ENCODE measurements at regions of chrX and their contacts with region 1.

Region 1: GRCh38 chrX:71532753-71533425 is at the start of gene OGT:
- DNase-seq: peak; percentile 95
- H3K4me3 Mint-ChIP-seq: peak within 1 kb of the TSS; percentile 96
- H3K27ac Mint-ChIP-seq: peak within 1 kb of the TSS; percentile 99
- H3K4me1 Mint-ChIP-seq: peaks cover 22% of the 10 kb centered on the region
- H3K27me3 Mint-ChIP-seq: no peaks in the 10 kb centered on the region
- total RNA-seq, gene OGT: 360 to 382 TPM

Region 2: GRCh38 chrX:71111141-71111843 is 421.6 kb before region 1 on chrX and contains the start of gene IL2RG:
- CTCF ChIA-PET with region 1: no interaction called
- POLR2A ChIA-PET with region 1: interaction called, 14 read pairs
- DNase-seq: peak; percentile 83
- H3K4me3 Mint-ChIP-seq: peak within 1 kb of the TSS; percentile 98
- H3K27ac Mint-ChIP-seq: peak within 1 kb of the TSS; percentile 99
- H3K4me1 Mint-ChIP-seq: peaks cover 39% of the 10 kb centered on the region
- H3K27me3 Mint-ChIP-seq: no peaks in the 10 kb centered on the region
- total RNA-seq, gene IL2RG: 633 to 637 TPM

Region 3: DNA sequence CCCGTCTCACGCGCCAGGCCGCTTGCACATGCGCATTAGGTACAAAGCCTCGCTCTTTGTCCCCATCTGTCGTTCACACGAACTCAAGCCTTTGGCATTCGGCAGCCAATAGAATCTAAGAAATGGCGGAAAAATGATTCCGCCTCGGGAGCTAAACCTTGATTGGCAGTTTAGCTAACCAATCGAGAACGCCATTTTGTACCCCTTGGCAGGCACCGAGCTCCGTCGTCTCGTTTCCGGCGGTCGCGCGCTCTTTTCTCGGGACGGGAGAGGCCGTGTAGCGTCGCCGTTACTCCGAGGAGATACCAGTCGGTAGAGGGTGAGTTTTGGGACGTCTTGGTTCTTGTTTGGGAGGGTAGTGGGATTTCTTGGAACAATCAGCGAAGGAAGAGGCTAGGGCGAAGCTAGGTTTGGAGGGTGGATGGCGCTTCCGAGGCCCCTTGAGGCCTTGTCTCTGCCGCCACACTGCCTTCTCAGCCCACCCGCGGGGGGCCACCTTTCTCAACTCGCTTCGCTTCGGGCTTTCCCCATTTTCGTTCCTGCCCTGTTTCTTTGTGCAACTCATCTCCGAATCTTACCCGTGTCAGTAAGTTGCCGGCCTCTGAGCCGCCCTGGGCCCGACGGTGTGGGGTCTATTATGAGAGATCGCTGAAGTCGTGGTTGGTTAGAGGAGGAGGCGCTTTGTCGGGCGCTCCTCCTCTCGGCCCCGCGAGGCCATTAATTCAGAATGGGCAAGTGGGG is 249.3 kb before region 1 on chrX and contains the start of gene NONO:
- CTCF ChIA-PET with region 1: interaction called, 6 read pairs
- POLR2A ChIA-PET with region 1: interaction called, 29 read pairs
- DNase-seq: peak; percentile 86
- H3K4me3 Mint-ChIP-seq: peak within 1 kb of the TSS; percentile 97
- H3K27ac Mint-ChIP-seq: peak within 1 kb of the TSS; percentile 99
- H3K4me1 Mint-ChIP-seq: peaks cover 16% of the 10 kb centered on the region
- H3K27me3 Mint-ChIP-seq: peaks cover 4% of the 10 kb centered on the region
- total RNA-seq, gene NONO: 376 to 400 TPM

Region 4: DNA sequence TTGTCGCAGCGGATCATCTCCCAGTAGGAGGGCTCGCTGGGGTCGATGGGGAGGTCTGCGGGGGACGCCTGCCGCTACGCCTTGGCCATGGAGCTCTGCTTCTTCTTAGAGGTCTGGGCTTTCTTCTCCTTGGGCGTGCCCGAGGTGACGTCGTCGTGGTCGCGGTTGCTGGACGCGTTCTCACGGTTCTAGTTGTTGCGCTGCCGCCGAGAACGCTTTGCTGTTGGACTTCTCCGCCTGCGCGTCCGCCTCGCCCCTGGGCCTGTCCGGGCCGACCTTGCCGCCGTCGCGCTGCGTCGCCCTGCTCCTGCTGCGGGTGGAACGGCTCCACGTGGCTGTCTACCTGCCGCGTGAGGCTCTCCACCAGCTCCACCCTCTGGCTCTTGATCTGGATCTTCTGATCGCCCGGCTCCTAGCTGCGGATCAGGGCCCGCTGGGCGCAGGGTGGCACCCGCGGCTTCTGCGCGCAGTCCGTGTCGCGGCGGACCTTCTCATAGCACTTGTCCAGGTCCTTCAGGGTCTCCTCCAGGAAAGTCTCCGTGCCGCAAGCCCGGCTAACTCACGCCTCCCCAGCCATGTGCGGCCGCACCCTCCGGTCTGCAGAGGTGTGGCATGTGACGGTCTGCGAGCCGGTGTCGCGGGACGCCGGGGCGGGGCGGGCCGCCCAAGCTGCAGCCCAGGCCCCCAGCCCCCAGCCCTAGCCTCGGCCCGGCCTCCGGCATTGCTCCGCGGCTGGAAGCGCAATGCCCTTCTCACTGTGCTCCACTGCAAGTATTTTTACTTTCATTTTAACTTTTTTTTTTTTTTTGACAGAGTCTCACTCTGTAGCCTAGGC is 40.4 kb before region 1 on chrX:
- CTCF ChIA-PET with region 1: no interaction called
- POLR2A ChIA-PET with region 1: interaction called, 48 read pairs
- DNase-seq: peak; percentile 42
- H3K4me3 Mint-ChIP-seq: peak overlapping the region; percentile 75
- H3K27ac Mint-ChIP-seq: no peak overlapping the region
- H3K4me1 Mint-ChIP-seq: peaks cover 13% of the 10 kb centered on the region
- H3K27me3 Mint-ChIP-seq: no peaks in the 10 kb centered on the region

Region 5: DNA sequence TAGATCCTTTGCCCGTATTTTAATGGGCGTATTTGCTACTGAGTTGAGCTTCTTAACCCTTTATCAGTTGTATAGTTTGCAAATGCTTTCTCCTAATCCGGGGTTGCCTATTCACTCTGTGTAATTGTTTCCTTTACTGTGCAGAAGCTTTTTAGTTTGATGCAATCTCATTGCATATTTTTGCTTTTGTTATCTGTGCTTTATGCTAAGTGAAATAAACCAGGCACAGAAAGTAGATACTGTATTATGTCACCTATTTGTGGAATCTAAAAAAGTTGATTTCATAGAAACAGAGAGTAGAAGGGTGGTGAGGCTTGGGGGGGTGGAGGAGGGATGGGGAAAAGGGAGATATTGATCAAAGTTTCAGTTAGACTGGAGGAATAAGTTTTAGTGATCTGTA is 17.7 kb after region 1 on chrX:
- CTCF ChIA-PET with region 1: interaction called, 4 read pairs
- POLR2A ChIA-PET with region 1: interaction called, 87 read pairs
- DNase-seq: no peak
- H3K4me3 Mint-ChIP-seq: no peak overlapping the region
- H3K27ac Mint-ChIP-seq: peak overlapping the region; percentile 27
- H3K4me1 Mint-ChIP-seq: peaks cover 27% of the 10 kb centered on the region
- H3K27me3 Mint-ChIP-seq: no peaks in the 10 kb centered on the region

Region 6: DNA sequence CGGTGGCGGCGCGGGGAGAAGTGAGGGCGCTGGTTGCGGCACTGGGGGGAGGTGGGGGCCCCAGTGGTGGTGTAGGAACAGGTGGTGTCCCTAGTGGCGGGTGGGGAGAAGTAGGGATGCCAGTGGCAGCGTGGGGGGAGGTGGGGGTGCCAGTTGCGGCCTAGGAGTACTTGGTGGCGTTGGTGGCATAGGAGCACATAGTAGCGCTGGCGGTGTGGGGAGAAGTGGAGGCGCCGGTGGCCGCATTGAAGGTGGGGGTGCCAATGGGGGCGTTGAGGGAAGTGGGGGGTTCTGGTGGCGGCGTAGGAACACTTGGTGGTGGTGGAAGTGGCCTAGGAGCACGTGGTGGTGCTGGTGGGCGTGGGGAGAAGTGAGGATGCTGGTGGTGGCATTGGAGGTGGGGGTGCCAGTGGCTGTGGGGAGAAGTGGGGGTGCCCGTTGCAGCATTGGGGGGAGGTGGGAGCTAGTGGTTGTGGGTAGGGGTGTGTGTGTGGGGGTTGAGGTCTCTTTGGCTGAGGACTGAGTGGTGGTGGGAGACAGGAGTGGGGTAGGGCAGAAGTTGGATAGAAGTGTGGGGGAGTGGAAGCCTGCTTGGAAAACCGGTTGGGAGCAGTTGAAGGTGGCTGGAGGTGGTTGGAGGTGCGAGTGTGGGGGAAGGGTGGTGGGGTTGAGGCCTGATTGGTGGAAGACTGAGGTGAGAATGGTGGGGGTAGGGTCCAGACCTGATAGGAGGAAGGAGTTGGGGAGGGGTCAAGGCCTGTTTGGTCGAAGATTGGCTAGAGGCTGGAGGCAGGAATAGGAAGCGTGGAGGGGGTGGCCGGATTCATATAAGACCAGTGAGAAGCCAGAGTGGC is 46.5 kb after region 1 on chrX:
- CTCF ChIA-PET with region 1: no interaction called
- POLR2A ChIA-PET with region 1: no interaction called
- DNase-seq: no peak
- H3K4me3 Mint-ChIP-seq: no peak overlapping the region
- H3K27ac Mint-ChIP-seq: no peak overlapping the region
- H3K4me1 Mint-ChIP-seq: no peaks in the 10 kb centered on the region
- H3K27me3 Mint-ChIP-seq: no peaks in the 10 kb centered on the region

Region 7: DNA sequence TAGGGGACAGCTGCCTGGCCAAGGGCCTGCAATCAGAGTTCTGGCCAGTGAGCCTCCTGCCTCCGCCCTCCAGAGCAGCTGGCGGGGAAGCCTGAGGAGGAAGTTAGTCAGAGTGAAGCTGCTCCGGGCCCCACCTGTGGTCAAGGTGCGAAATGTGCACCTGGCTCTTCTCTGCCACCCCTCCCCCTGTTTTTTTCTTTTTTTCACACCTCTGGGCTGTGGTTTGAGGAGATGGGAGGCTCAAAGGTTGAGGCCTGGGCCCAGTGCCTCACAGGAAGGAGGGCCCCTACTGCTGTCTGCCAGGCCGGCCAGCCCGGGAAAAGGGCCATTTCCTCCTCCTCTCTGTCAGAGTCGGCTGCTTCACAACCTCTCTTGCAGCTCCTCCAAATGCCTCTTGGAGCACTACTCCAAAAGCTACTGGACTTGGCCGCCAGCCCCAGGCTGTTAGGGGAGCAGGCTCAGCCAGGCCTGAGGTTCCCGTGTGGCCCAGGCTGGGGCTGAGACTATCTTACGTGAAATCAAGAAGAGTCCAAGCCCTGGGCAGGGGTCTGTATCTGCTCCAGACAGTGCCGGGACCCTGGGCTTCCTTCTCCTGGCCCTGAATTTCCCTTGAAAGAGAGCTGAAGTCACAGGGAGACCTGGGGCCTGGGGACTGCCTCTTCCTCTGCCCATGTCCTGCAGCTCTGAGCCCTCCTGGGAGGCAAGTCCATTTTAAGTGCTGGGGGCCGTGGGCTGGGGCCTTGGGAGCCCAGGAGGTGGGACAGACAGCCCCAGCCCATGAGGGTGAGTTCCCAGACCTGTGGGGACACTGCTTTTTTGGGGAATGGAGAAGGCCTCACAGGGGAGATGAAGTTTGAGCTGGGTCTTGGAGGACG is 89.9 kb after region 1 on chrX:
- CTCF ChIA-PET with region 1: interaction called, 4 read pairs
- POLR2A ChIA-PET with region 1: interaction called, 87 read pairs
- DNase-seq: peak; percentile 78
- H3K4me3 Mint-ChIP-seq: peak overlapping the region; percentile 56
- H3K27ac Mint-ChIP-seq: peak overlapping the region; percentile 90
- H3K4me1 Mint-ChIP-seq: peaks cover 65% of the 10 kb centered on the region
- H3K27me3 Mint-ChIP-seq: no peaks in the 10 kb centered on the region